Mammary epithelial cell (primary cell): ENCODE measurements at regions of chr13 and their contacts with region 1.

Region 1: DNA sequence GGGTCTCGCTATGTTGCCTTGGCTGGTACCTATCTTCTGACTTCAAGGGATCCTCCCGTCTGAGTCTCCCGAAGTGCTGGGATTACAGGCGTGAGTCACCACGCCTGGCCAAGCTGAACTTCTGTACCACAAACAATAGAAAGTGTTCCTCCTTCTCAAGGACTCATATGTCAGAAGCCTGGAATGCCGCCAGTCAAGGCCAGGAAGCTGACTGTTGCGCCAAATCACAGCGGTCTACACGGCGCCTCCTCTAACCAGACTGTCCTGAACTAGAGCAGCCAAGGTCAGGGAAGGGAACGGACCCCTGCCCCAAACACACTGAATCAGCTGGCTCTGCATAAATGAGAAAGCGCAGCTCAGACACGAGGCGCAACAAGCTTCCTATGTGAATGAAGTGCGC is 14.6 kb downstream of the RAB20 start:
- DNase-seq: peak; percentile 41
- H3K4me3 ChIP-seq: no peak overlapping the region
- H3K27ac ChIP-seq: no peak overlapping the region
- H3K4me1 ChIP-seq: no peaks in the 10 kb centered on the region
- H3K27me3 ChIP-seq: no peaks in the 10 kb centered on the region
- CTCF ChIP-seq: no peak

Region 2: GRCh38 chr13:110509971-110510786 is 36.8 kb before region 1 on chr13:
- CTCF ChIA-PET with region 1: no interaction called
- dilution Hi-C with region 1: loop called (anchors 5 kb)
- in situ Hi-C with region 1: no loop called
- intact Hi-C with region 1: no loop called
- DNase-seq: no peak
- H3K4me3 ChIP-seq: no peak overlapping the region
- H3K27ac ChIP-seq: no peak overlapping the region
- H3K4me1 ChIP-seq: no peaks in the 10 kb centered on the region
- H3K27me3 ChIP-seq: no peaks in the 10 kb centered on the region
- CTCF ChIP-seq: no peak